ENCODE measurements at regions of chr2 and their contacts with region 1.

Region 1: GRCh38 chr2:88159955-88160415 is 10.2 kb upstream of the THNSL2 start:
- DNase-seq: peak in 7 of 10 donors; percentile 36 to 82 (median 63)
- H3K4me3 ChIP-seq: no peak overlapping the region
- H3K27ac ChIP-seq: peak overlapping the region in 2 of 59 donors; percentile 11 to 38
- H3K27me3 ChIP-seq: no peaks in the 10 kb centered on the region
- CTCF ChIP-seq: peak; percentile 79 to 98 (median 93)

Region 2: GRCh38 chr2:88003074-88003755 is 156.8 kb before region 1 on chr2:
- intact Hi-C with region 1: loop called in 1 of 2 experiments (anchors 5 kb)
- DNase-seq: no peak
- H3K4me3 ChIP-seq: peak overlapping the region in 1 of 59 donors; percentile 21
- H3K27ac ChIP-seq: peak overlapping the region in 1 of 59 donors; percentile 31
- H3K27me3 ChIP-seq: no peaks in the 10 kb centered on the region
- CTCF ChIP-seq: no peak

Measured in dorsolateral prefrontal cortex (tissue), 120 donors.